MCF 10A (cell line): ENCODE measurements at regions of chr20 and their contacts with region 1.

Region 1: GRCh38 chr20:52104546-52105441 is 86.8 kb downstream of the ZFP64 start:
- DNase-seq: peak; percentile 39
- H3K4me3 Mint-ChIP-seq: peak overlapping the region; percentile 66
- H3K27ac Mint-ChIP-seq: no peak overlapping the region
- H3K4me1 Mint-ChIP-seq: no peaks in the 10 kb centered on the region
- H3K27me3 Mint-ChIP-seq: no peaks in the 10 kb centered on the region
- CTCF ChIP-seq: no peak

Region 2: DNA sequence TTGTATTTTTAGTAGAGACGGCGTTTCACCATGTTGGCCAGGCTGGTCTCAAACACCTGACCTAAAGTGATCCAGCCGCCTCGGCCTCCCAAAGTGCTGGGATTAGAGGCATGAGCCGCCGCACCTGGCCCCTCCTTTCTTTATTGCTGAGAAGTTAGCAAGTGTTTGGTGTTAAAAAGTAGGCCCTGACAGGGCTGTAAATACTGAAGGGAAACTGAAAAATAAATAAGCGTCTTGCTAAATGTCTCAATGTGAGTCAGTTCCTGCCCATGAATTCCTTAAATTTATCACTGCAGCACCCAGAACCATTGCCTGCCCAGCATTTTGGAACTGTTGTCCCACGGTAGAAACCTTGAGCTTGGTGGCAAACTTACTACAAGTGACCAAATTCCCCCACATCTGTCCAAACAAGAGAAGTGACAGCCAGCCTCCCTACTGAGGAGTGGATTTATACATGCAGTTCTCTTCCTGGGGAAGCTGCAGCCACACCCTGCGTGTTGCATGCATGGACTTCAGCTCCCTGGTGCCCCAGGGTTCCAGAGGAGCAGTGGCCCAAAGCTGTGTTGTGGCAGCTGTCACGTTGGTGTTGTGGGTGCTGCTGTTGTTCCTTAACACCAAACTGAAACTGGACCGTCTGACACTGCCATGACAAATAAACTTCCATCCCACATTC is 362.0 kb before region 1 on chr20:
- CTCF ChIA-PET with region 1: no interaction called
- POLR2A ChIA-PET with region 1: no interaction called
- intact Hi-C with region 1: no loop called
- DNase-seq: peak; percentile 50
- H3K4me3 Mint-ChIP-seq: no peak overlapping the region
- H3K27ac Mint-ChIP-seq: peak overlapping the region; percentile 67
- H3K4me1 Mint-ChIP-seq: peaks cover 6% of the 10 kb centered on the region
- H3K27me3 Mint-ChIP-seq: no peaks in the 10 kb centered on the region
- CTCF ChIP-seq: no peak

Region 3: DNA sequence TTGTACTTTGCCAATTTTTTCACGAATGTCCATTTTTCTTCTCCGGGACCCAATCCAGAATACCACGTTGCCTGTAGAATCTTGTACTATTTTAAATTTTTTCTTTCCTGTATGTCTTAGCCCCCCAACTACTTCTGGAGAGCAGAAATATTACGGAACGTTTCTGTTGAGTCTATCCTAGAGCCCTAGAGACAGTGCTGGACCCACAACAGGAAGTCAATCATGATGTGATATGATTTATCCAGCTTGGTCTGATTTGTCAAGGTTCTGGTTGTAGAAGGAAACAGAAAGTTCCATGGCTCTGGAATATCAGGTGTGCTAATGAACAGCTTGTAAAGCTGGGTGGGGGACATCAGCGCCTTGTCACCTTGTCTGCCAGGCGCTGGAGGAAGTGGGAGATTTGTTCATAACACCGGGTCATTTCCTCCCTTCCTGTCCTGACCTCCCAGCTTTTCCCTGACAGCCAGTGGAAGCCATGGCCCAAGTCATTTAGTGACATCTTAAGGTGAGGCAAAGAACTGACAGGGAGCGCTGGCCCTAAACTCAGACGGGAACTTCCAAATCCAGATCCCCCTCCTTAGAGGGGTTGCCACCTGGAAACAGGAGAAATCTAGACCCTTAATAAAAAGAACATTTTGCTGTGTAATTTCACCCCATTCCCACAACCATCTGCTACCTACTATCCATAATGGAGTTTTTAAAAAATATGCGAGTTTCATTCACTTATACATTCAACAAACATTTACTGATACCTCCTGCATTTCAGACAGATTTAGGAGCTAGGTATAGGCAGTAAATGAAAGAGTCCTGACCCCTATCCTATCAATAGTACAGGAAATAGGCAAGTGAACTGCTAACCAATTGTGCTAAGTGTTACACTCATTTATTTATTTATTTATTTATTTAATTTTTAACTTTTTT is 43.7 kb before region 1 on chr20:
- CTCF ChIA-PET with region 1: no interaction called
- POLR2A ChIA-PET with region 1: no interaction called
- intact Hi-C with region 1: no loop called
- DNase-seq: peak; percentile 33
- H3K4me3 Mint-ChIP-seq: no peak overlapping the region
- H3K27ac Mint-ChIP-seq: no peak overlapping the region
- H3K4me1 Mint-ChIP-seq: peaks cover 9% of the 10 kb centered on the region
- H3K27me3 Mint-ChIP-seq: no peaks in the 10 kb centered on the region
- CTCF ChIP-seq: peak; percentile 32

Region 4: DNA sequence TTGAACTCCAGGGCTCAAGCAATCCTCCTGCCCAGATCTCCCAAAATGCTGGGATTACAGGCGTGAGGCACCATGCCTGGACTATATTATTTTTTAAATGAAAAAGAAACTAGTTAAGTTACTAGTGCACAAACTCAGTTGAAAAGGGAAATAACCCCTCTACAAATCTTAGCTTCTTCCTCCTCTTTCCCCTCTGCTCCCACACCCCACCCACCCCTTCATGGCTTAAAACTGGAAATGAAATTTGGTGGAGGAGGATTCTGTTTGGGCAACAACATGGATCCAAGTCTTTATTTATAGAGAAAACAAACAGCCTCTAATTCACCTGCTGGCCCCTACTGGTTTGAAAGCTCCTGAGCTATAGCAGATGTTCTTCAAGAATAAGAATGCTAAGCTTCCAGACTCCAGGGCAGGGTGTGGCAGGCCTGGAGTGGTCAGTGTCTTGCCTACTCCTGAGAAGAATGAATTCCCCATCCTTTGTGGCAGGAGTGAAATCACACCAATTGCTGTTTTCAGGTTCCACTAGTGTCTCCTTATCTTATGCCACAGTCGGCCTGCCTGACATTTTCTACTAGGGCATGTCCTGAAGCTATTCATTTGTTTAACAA is 13.3 kb after region 1 on chr20:
- CTCF ChIA-PET with region 1: interaction called, 10 read pairs
- POLR2A ChIA-PET with region 1: interaction called, 3 read pairs
- intact Hi-C with region 1: no loop called
- DNase-seq: no peak
- H3K4me3 Mint-ChIP-seq: no peak overlapping the region
- H3K27ac Mint-ChIP-seq: no peak overlapping the region
- H3K4me1 Mint-ChIP-seq: no peaks in the 10 kb centered on the region
- H3K27me3 Mint-ChIP-seq: no peaks in the 10 kb centered on the region
- CTCF ChIP-seq: no peak

Region 5: GRCh38 chr20:52139986-52140385 is 35.2 kb after region 1 on chr20:
- CTCF ChIA-PET with region 1: no interaction called
- POLR2A ChIA-PET with region 1: no interaction called
- intact Hi-C with region 1: no loop called
- DNase-seq: no peak
- H3K4me3 Mint-ChIP-seq: no peak overlapping the region
- H3K27ac Mint-ChIP-seq: no peak overlapping the region
- H3K4me1 Mint-ChIP-seq: no peaks in the 10 kb centered on the region
- H3K27me3 Mint-ChIP-seq: no peaks in the 10 kb centered on the region
- CTCF ChIP-seq: no peak

Region 6: DNA sequence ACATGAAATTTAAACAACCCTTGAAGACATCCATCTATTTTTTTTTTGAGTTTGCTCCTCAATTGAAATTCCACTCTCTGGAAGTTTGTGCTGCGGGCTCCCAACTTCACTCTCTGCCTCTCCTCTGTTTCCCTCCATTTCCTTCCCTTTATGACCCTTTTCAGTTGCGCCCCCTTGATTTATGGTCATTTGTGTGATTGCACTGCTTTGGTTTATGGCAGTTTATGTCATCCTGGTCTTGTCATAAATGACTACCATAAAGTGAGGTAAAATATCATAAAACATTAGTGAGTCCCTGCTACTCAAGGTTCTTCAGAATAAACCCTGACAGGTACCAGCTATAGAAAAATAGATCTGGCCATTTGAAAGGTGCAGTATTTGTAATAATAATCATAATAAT is 435.1 kb after region 1 on chr20:
- CTCF ChIA-PET with region 1: no interaction called
- POLR2A ChIA-PET with region 1: no interaction called
- intact Hi-C with region 1: no loop called
- DNase-seq: no peak
- H3K4me3 Mint-ChIP-seq: no peak overlapping the region
- H3K27ac Mint-ChIP-seq: no peak overlapping the region
- H3K4me1 Mint-ChIP-seq: no peaks in the 10 kb centered on the region
- H3K27me3 Mint-ChIP-seq: no peaks in the 10 kb centered on the region
- CTCF ChIP-seq: no peak